Activated CD4-positive, alpha-beta T cell treated with anti-CD3 and anti-CD28 coated beads, Interleukin-2, amount 10 ng/mL, durations not matched to agents 24 days and 14 days (primary cell): ENCODE measurements at regions of chr18 and their contacts with region 1.

Region 1: GRCh38 chr18:34867520-34867919 is 157.4 kb downstream of the DTNA start:
- DNase-seq: no peak
- H3K4me3 Mint-ChIP-seq: no peak overlapping the region
- H3K27ac Mint-ChIP-seq: peak overlapping the region; percentile 26
- H3K4me1 Mint-ChIP-seq: peaks cover 26% of the 10 kb centered on the region
- H3K27me3 Mint-ChIP-seq: peaks cover 6% of the 10 kb centered on the region

Region 2: DNA sequence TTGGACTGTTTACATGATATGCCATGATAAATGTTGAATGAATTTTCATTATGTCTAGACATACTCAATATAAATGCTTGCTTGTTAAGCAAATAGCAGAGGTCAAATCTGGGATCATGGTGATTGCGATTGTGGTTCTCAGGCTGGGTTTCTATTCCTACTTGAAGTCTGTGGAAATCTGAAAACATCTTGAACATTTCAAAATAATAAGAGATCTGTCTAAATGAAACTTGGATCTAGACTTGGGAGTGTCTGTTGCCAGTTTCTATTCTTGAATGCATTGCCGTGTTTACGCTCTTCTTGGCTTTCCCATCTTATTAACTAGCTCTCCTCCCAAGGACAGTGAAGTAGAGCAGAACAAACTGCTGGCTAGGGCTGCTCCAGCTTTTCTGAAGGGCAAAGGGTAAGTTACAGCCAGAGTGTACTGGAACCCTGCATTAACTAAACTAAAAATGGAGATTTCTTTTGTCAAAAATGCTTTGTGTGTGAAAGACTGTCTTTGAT is 29.7 kb before region 1 on chr18:
- intact Hi-C with region 1: no loop called
- DNase-seq: no peak
- H3K4me3 Mint-ChIP-seq: no peak overlapping the region
- H3K27ac Mint-ChIP-seq: no peak overlapping the region
- H3K4me1 Mint-ChIP-seq: peaks cover 8% of the 10 kb centered on the region
- H3K27me3 Mint-ChIP-seq: peaks cover 5% of the 10 kb centered on the region

Region 3: DNA sequence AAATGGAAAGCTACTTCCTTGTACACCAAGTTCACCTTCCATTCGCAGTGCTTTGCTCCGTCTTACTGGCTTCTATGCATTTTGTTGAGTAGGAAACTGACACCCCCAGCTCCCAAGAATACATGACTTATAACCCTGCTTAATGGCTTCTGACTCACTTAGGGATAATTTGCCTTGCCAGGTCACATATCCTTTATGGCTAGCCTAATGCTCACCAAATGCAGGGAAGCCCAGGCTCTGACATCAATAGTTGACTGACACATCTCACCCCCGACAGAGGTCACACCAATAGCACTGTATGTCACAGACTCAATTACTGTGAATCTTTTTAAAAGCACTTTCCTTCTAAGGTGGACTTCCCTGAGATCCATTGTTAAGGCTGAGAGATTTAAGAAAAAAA is 10.2 kb before region 1 on chr18:
- intact Hi-C with region 1: loop called (anchors 1 kb)
- DNase-seq: no peak
- H3K4me3 Mint-ChIP-seq: no peak overlapping the region
- H3K27ac Mint-ChIP-seq: no peak overlapping the region
- H3K4me1 Mint-ChIP-seq: peaks cover 7% of the 10 kb centered on the region
- H3K27me3 Mint-ChIP-seq: peaks cover 32% of the 10 kb centered on the region

Region 4: GRCh38 chr18:34971313-34971712 is 103.8 kb after region 1 on chr18:
- intact Hi-C with region 1: no loop called
- DNase-seq: no peak
- H3K4me3 Mint-ChIP-seq: no peak overlapping the region
- H3K27ac Mint-ChIP-seq: no peak overlapping the region
- H3K4me1 Mint-ChIP-seq: peaks cover 1% of the 10 kb centered on the region
- H3K27me3 Mint-ChIP-seq: peaks cover 40% of the 10 kb centered on the region

Region 5: DNA sequence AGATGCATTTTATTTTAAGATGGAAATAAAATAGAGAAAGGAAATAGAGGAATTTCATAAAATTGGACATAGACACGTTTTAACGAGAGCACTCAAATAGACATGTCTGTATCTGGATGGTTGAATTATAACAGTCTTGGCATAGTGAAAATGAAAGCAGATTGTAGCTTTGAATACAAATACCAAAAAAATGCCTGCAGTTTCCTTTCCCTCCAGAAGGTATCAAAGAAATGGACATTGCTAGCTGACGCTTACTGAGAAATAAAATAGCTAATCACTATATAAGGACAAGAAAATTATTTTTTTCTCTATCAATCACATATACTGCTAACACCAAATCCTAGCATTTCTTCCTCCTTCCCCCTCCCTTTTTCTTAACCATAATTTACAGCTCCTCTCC is 162.2 kb after region 1 on chr18:
- intact Hi-C with region 1: loop called (anchors 5 kb)
- DNase-seq: no peak
- H3K4me3 Mint-ChIP-seq: peak overlapping the region; percentile 89
- H3K27ac Mint-ChIP-seq: peak overlapping the region; percentile 97
- H3K4me1 Mint-ChIP-seq: peaks cover 40% of the 10 kb centered on the region
- H3K27me3 Mint-ChIP-seq: no peaks in the 10 kb centered on the region

Region 6: GRCh38 chr18:35616664-35617423 is 749.3 kb after region 1 on chr18:
- intact Hi-C with region 1: loop called (anchors 10 kb)
- DNase-seq: peak; percentile 85
- H3K4me3 Mint-ChIP-seq: no peak overlapping the region
- H3K27ac Mint-ChIP-seq: no peak overlapping the region
- H3K4me1 Mint-ChIP-seq: peaks cover 2% of the 10 kb centered on the region
- H3K27me3 Mint-ChIP-seq: no peaks in the 10 kb centered on the region

Region 7: DNA sequence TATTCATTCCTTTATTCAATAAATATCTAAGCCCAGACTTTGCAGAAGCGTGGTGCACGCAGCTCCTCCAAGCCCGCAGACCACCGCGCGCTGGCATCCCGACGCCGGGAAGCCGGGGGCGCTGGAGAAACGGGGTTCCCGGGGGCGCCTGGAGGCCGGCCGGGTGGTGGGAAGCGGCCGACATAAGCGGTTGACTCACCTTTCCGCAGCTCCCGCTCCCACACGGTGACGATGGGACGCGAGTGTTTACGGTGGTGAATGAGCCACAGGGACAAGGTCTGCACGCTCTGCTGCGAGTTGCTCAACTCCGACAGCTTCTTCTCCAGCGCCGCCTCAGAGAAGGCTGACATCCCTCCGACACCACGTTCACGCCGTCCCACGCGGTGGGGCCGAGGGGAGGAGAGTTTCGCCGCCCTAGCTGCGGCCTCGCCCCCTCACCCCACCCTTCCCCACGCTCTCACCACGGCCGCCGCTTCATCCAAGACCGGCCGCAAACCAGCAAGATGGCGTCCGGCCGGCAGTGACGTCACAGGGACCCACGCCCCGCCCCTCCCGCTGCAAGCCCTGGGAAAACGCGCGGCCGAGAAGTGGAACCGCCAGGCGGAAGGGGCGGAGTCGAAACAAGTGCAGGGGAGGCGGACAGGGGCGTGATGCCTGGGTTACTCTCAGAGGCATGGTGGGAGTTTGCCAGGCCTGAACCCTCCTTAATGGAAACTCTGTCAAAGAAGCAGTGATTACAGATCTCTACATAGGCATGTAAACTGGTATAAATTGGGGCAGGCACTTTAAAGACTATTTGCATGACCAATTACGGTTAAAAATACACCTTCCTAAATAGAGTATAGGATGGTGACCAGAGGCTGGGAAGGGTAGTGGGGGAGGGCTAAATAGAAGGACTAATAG is 1199.8 kb after region 1 on chr18 and contains the start of gene RPRD1A:
- intact Hi-C with region 1: loop called (anchors 10 kb)
- DNase-seq: peak; percentile 99
- H3K4me3 Mint-ChIP-seq: peak within 1 kb of the TSS; percentile 95
- H3K27ac Mint-ChIP-seq: peak within 1 kb of the TSS; percentile 97
- H3K4me1 Mint-ChIP-seq: peaks cover 28% of the 10 kb centered on the region
- H3K27me3 Mint-ChIP-seq: peaks cover 7% of the 10 kb centered on the region
- total RNA-seq, gene RPRD1A: 24.6 and 27.4 TPM in 2 replicates

Region 8: DNA sequence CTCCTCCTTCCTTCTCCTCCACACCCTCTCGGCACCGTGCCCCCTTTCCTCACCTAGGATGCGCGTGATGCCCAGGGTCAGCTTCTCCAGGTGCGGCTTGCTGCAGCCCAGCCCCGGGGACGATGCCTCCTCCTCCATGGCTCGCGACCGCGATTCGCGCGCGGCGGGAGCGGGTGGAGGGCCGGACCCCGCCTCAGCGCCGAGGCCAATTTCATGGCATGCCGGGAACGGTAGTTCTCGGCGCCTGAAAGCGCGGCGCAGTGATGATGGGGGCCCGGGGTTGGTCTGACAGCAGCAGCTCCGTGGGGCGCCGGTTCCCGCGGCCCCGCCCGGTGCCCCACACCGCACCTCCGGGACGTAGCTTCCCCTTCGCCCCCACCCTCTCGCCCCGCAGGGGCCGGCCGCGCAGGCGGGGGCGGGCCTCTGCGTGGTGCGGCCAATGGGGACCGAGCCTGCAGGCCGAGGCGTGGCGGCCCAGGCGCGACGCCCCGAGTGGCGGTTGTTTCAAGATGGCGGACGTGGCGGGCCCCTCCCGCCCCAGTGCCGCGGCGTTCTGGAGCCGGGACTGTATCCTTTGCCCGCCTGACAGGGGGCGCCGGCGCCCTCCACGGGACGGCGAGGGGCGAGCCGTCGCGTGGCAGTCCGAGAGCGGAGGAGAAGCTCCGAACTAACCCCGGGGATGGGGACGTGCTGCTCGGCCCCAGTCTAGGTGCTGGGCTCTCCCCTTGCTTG is 1961.3 kb after region 1 on chr18 and contains the starts of genes KIAA1328 and TPGS2:
- intact Hi-C with region 1: loop called (anchors 10 kb)
- DNase-seq: peak; percentile 97
- H3K4me3 Mint-ChIP-seq: peak within 1 kb of the TSS; percentile 83
- H3K27ac Mint-ChIP-seq: peak within 1 kb of the TSS; percentile 98
- H3K4me1 Mint-ChIP-seq: peaks cover 45% of the 10 kb centered on the region
- H3K27me3 Mint-ChIP-seq: no peaks in the 10 kb centered on the region
- total RNA-seq, gene KIAA1328: 7.3 and 7.6 TPM in 2 replicates
- total RNA-seq, gene TPGS2: 76.9 and 77.5 TPM in 2 replicates